CD4-positive, alpha-beta T cell (primary cell): ENCODE measurements at regions of chr12 and their contacts with region 1.

Region 1: DNA sequence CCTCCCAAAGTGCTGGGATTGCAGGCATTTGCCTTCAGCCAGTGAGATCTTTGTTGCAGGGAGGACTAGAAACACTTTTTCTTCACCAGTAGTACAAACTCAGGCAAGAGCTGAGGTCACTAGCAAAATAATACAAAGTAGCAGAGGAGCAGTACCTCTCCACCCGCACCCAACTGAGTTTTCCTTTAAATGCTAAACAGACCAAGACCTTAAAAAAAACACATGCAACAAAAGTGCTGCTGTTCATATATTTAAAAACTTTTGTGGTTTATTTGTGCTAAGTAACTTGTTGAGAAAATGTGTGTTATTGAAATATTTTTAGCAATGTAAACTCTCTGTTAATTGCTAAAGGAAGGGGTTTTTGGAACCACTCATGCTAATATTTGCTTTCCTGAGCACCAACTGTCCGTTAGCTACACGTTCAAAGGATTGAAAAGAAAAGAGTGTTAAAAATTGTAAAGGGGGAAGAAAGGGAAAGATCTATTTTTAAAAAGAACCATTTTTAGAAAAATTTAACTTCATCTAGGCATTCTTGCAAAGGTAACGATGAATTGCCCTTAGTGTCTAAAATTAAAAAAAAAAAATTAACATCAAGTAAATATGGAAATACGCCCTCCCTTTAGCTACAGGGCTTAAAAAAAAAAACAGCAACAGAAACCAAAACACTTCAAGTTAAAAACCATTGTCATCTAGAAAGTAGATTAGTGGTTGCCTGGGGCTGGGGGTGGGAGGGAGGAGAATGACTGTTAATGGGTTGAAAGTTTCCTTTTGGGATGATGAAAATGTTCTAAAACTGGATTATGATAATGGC is 114.0 kb upstream of the KRAS start:
- DNase-seq: peak in 1 of 14 experiments; percentile 32
- ATAC-seq: peak; percentile 61
- H3K4me3 ChIP-seq: no peak overlapping the region
- H3K4me3 Mint-ChIP-seq: peak overlapping the region; percentile 22
- H3K27ac ChIP-seq: no peak overlapping the region
- H3K27ac Mint-ChIP-seq: no peak overlapping the region
- H3K4me1 ChIP-seq: no peaks in the 10 kb centered on the region
- H3K4me1 Mint-ChIP-seq: peaks cover 19% of the 10 kb centered on the region
- H3K27me3 ChIP-seq: no peaks in the 10 kb centered on the region
- H3K27me3 Mint-ChIP-seq: no peaks in the 10 kb centered on the region
- CTCF ChIP-seq: no peak

Region 2: GRCh38 chr12:25328072-25328712 is 36.5 kb before region 1 on chr12:
- CTCF ChIA-PET with region 1: no interaction called
- POLR2A ChIA-PET with region 1: no interaction called
- intact Hi-C with region 1: loop called in 1 of 2 experiments (anchors 5 kb)
- DNase-seq: no peak
- ATAC-seq: no peak
- H3K4me3 ChIP-seq: no peak overlapping the region
- H3K4me3 Mint-ChIP-seq: no peak overlapping the region
- H3K27ac ChIP-seq: no peak overlapping the region
- H3K27ac Mint-ChIP-seq: no peak overlapping the region
- H3K4me1 ChIP-seq: peaks cover 10% of the 10 kb centered on the region
- H3K4me1 Mint-ChIP-seq: peaks cover 12% of the 10 kb centered on the region
- H3K27me3 ChIP-seq: no peaks in the 10 kb centered on the region
- H3K27me3 Mint-ChIP-seq: no peaks in the 10 kb centered on the region
- CTCF ChIP-seq: no peak

Region 3: GRCh38 chr12:25347716-25348271 is 16.9 kb before region 1 on chr12:
- CTCF ChIA-PET with region 1: no interaction called
- POLR2A ChIA-PET with region 1: no interaction called
- intact Hi-C with region 1: loop called in 1 of 2 experiments (anchors 2 kb)
- DNase-seq: no peak
- ATAC-seq: no peak
- H3K4me3 ChIP-seq: no peak overlapping the region
- H3K4me3 Mint-ChIP-seq: no peak overlapping the region
- H3K27ac ChIP-seq: no peak overlapping the region
- H3K27ac Mint-ChIP-seq: no peak overlapping the region
- H3K4me1 ChIP-seq: no peaks in the 10 kb centered on the region
- H3K4me1 Mint-ChIP-seq: peaks cover 5% of the 10 kb centered on the region
- H3K27me3 ChIP-seq: no peaks in the 10 kb centered on the region
- H3K27me3 Mint-ChIP-seq: no peaks in the 10 kb centered on the region
- CTCF ChIP-seq: no peak